Sigmoid colon (tissue), 7 donors: ENCODE measurements at regions of chr9 and their contacts with region 1.

Region 1: GRCh38 chr9:130243015-130243734 is 22.4 kb upstream of the HMCN2 start:
- DNase-seq: peak; percentile 87
- H3K4me3 ChIP-seq: peak overlapping the region in 2 of 4 donors; percentile 16 to 26
- H3K27ac ChIP-seq: peak overlapping the region in 1 of 4 donors; percentile 92
- H3K4me1 ChIP-seq: peaks cover 0 to 31% (median 24%) of the 10 kb centered on the region in 4 donors
- H3K27me3 ChIP-seq: no peaks in the 10 kb centered on the region
- CTCF ChIP-seq: peak; percentile 88 to 98 (median 93)
- EP300 ChIP-seq: no peak
- POLR2A ChIP-seq: no peak

Region 2: DNA sequence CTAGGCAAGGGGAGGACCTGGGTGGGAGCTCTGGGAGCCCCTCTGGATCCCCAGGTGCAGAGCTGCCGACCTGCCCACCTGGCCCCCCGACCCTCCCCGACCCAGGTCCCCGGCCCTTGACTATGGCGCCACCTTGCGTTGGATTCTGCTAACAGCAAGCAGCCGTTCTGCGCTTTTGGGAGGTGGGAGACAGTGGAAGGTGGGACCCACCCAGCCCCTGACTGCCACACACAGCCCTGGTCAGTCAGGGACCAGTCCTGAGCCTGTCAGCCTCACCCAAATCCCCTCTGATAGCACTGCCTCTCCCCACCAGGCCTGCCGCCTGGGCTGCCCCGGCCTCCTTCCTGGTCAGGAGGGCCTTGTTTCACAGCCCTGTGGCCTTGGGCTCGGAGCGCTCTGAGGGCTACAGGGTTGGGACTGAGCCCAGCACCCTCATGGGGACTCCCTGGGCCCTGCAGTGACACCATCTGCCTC is 100.3 kb after region 1 on chr9:
- intact Hi-C with region 1: loop called (anchors 2 kb)
- DNase-seq: peak; percentile 75
- H3K4me3 ChIP-seq: no peak overlapping the region
- H3K27ac ChIP-seq: peak overlapping the region in 3 of 4 donors; percentile 26 to 70 (median 43)
- H3K4me1 ChIP-seq: peaks cover 0 to 23% (median 12%) of the 10 kb centered on the region in 4 donors
- H3K27me3 ChIP-seq: no peaks in the 10 kb centered on the region
- CTCF ChIP-seq: peak; percentile 75 to 89 (median 86)
- EP300 ChIP-seq: no peak
- POLR2A ChIP-seq: no peak